ENCODE measurements at regions of chr13 and their contacts with region 1.

Region 1: DNA sequence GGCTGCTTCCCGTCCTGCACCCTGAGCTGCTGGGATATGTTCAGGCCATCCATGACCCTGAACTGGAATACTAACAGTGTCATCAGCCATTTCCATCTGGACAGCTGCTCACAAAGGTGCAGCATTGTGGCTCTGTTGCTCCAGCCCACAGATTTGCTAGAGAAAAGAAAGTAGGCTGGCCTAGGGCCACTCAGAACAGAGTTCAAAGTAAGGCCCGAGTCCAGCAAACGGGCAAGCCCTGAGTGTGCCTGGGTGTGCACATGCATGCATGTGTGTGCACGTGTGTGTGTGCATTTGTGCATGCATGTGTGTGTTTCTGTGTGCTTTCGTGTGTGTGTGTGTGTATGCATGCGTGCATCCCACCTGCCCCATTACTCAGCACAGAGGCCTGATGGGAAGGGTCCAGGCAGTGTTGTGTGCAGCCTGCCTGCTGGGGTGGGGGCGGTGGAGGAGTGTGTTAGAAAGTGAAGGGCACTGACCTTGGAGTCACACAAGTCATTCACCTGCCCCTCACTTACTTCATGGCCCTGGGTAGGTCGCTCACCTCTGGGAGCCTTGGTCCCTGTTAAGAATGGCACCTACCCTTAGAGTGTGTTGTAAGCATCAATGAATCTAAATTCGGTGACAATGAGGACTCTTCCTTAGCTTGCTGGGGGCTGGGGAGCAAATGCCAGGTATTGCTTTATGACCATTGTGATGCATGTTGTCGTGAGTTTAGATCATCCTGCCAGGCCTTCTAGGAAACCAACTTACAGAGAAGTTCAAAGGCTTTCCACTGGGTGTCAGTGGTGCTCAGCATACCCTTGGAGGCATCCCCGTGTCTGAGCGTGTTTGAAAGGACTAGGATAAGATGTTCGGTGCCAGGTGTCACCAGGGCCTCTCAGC is 53.2 kb downstream of the GPR12 start:
- H3K4me3 ChIP-seq: no peak overlapping the region
- H3K27ac ChIP-seq: no peak overlapping the region
- H3K4me1 ChIP-seq: no peaks in the 10 kb centered on the region
- CTCF ChIP-seq: peak; percentile 37; the same call in 1 of the 2 replicates

Region 2: DNA sequence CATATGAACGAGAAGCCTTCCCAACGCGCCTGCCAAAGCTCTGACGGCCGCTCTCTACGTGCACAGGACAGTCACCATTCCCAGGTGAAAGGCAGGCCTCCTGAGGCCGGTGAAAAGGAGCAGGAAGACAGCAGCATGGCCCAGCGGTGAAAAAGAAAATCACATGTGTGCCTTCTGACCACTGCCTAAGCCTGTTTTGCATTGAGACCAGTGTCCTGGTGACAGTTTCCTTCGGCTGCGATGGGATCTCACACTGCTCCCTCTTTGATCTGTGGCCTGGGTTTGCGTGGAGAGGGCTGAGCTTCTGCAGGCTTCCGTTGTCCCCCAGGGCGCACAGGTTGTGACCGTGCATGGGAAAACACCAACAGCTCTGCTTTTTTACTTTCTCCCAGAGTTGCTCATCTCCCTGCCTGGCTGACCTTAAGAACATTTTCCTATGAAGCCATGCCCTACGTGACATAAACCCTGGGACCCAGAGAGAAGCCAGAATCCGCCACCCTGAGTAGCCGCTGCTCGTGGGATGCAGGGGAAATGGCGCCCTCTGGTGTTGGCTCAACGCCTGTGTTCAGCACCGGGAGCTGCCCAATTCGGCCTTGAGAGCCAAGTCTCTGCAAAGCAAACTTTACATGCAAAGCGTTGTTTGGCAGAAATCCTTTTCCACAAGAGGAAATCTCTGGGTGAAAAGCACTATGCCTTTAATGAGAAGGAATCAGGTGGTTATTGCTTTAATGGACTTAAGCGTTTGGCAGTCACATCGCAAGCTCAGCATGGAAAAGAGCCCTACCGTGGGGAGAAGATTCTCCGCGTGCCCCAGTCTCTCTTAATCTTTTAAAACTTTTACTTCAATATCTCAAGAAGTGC is 165.4 kb after region 1 on chr13:
- CTCF ChIA-PET with region 1: interaction called, 48 read pairs
- POLR2A ChIA-PET with region 1: no interaction called
- H3K4me3 ChIP-seq: no peak overlapping the region
- H3K27ac ChIP-seq: no peak overlapping the region
- H3K4me1 ChIP-seq: no peaks in the 10 kb centered on the region
- CTCF ChIP-seq: peak; percentile 35; the same call in 1 of the 2 replicates

Measured in HEK293 (cell line).